A673 (cell line): ENCODE measurements at regions of chr6 and their contacts with region 1.

Region 1: DNA sequence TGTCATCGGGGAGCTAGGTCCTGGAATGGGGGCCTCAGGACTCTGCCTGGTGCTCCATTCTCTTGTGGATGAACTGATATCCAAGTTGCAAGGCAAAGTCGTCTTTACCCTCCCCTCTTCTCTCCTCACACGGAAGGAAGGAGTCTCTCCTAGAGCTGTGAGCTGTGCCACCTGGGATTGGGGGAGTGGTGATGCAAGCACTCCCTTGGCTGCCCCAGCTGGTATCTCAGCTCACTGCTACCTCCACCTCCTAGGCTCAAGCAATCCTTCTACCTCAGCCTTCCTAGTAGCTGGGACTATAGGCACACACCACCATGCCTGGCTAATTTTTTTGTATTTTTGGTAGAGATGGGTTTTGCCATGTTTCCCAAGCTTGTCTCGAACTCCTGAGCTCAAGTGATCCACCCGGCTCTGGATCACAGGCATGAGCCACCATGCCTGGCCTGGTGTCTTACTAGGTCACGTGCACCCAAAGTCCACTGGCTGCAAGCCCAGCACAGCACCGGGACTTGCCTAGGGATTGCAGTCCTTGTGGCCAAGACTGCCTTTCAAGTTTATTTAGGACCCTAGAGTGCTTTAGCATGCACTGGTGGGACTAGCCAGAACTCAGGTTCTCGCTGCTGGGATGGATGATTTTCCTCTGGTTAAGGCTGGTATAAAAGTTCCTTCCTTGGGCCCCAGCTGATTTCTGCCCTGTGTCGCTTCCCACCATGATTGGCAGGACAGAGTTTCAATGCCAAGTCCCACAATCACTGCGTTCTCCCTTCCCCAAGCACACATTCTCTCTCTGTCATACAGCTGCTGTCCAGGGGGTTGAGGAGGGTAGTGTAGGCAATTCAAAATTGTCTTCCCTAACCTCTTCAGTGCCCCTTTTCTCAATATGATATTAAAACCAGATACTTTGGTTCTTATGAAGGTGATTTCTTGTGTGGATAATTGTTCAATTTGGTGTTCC is 33.5 kb downstream of the SMAP1 start:
- DNase-seq: no peak
- H3K4me3 ChIP-seq: no peak overlapping the region
- H3K27ac ChIP-seq: no peak overlapping the region
- H3K4me1 ChIP-seq: no peaks in the 10 kb centered on the region
- H3K27me3 ChIP-seq: no peaks in the 10 kb centered on the region
- CTCF ChIP-seq: no peak

Region 2: GRCh38 chr6:69957985-69958559 is 743.1 kb before region 1 on chr6:
- CTCF ChIA-PET with region 1: no interaction called
- POLR2A ChIA-PET with region 1: no interaction called
- intact Hi-C with region 1: no loop called
- DNase-seq: no peak
- H3K4me3 ChIP-seq: no peak overlapping the region
- H3K27ac ChIP-seq: no peak overlapping the region
- H3K4me1 ChIP-seq: no peaks in the 10 kb centered on the region
- H3K27me3 ChIP-seq: no peaks in the 10 kb centered on the region
- CTCF ChIP-seq: no peak

Region 3: DNA sequence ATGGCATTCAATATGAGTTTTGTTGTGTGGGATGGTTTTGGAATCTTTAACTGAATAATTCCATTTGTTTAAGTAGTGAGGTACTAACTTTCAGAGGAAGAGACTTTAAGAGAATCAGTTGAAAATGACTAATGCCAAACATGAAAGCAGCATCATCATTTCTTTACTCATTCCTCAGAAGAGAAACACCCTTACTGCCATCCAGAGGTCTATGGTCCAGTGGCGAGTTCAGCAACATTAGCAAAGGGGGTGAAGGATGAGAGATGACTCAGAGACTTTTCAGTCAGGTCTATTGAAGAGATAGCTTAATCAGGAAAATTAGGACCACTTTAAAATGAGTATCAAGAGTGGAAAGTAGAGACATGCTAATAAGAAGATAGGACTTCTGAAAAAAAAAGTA is 716.0 kb before region 1 on chr6:
- CTCF ChIA-PET with region 1: no interaction called
- POLR2A ChIA-PET with region 1: no interaction called
- intact Hi-C with region 1: no loop called
- DNase-seq: no peak
- H3K4me3 ChIP-seq: no peak overlapping the region
- H3K27ac ChIP-seq: no peak overlapping the region
- H3K4me1 ChIP-seq: peaks cover 3% of the 10 kb centered on the region
- H3K27me3 ChIP-seq: no peaks in the 10 kb centered on the region
- CTCF ChIP-seq: no peak

Region 4: DNA sequence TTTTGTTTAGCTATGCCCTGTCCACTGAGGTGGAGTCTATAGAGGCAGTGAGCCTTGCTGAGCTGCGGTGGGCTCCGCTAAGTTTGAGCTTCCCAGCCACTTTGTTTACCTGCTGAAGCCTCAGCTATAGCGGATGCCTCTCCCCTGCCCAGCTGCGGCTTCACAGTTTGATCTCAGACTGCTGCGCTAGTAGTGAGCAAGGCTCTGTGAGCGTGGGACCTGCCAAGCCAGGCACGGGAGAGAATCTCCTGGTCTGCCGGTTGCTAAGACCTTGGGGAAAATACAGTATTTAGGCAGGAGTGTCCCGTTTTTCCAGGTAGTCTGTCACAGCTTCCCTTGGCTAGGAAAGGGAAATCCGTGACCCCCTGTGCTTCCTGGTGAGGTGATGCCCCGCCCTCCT is 104.9 kb after region 1 on chr6:
- CTCF ChIA-PET with region 1: no interaction called
- POLR2A ChIA-PET with region 1: no interaction called
- intact Hi-C with region 1: no loop called
- DNase-seq: no peak
- H3K4me3 ChIP-seq: no peak overlapping the region
- H3K27ac ChIP-seq: no peak overlapping the region
- H3K4me1 ChIP-seq: no peaks in the 10 kb centered on the region
- H3K27me3 ChIP-seq: no peaks in the 10 kb centered on the region
- CTCF ChIP-seq: no peak

Region 5: GRCh38 chr6:70884074-70884983 is 183.1 kb after region 1 on chr6:
- CTCF ChIA-PET with region 1: interaction called, 10 read pairs
- POLR2A ChIA-PET with region 1: no interaction called
- intact Hi-C with region 1: loop called (anchors 1 kb)
- DNase-seq: peak; percentile 72
- H3K4me3 ChIP-seq: no peak overlapping the region
- H3K27ac ChIP-seq: no peak overlapping the region
- H3K4me1 ChIP-seq: no peaks in the 10 kb centered on the region
- H3K27me3 ChIP-seq: no peaks in the 10 kb centered on the region
- CTCF ChIP-seq: peak; percentile 92

Region 6: GRCh38 chr6:71929047-71929446 is 1227.8 kb after region 1 on chr6:
- CTCF ChIA-PET with region 1: no interaction called
- POLR2A ChIA-PET with region 1: no interaction called
- intact Hi-C with region 1: no loop called
- DNase-seq: no peak
- H3K4me3 ChIP-seq: no peak overlapping the region
- H3K27ac ChIP-seq: no peak overlapping the region
- H3K4me1 ChIP-seq: no peaks in the 10 kb centered on the region
- H3K27me3 ChIP-seq: no peaks in the 10 kb centered on the region
- CTCF ChIP-seq: no peak